GM12878 (cell line): ENCODE measurements at regions of chr15 and their contacts with region 1.

Region 1: DNA sequence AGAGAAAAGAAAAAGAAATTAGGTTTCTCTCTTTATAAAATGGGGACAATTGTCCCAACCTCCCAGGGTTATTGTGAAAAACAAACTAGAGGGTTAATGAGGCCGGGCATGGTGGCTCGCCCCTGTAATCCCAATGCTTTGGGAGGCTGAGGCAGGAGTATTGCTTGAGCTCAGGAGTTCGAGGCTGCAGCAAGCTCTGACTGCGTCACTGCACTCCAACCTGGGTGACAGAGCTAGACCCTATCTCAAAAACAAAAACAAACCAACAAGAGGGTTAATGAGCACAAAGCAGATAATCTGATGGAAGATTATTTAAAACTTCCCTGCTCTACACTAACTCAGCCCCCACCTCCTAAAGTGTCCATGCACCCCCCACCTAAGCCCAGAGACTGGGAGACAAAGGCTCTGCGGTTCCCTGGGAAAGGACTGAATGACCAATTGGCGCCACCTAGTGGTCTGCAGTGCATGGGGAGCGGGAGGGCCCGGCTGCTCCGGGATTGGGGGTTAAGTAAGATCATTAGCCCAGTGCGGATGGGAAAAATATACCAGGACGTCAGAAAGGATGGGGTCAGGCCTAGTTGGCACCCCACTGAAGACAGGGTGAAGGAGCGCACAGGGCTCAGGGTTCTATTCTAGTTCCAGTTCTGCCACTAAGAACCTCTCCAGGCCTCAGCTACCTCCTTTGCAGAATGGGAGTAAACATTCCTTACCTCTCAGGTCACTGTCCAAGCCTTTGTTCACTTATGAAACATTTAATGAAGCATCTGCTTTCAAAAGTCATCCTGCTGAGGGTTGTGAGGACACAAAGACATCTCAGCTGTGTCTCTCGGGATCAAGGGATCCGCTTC is 15.6 kb downstream of the PIF1 start:
- DNase-seq: no peak
- ATAC-seq: peak; percentile 58
- H3K4me3 ChIP-seq: no peak overlapping the region
- H3K27ac ChIP-seq: no peak overlapping the region
- H3K4me1 ChIP-seq: peaks cover 17% of the 10 kb centered on the region
- H3K27me3 ChIP-seq: no peaks in the 10 kb centered on the region
- CTCF ChIP-seq: peak; percentile 92 to 95 (median 95)
- EP300 ChIP-seq: no peak
- POLR2A ChIP-seq: no peak
- RAD21 ChIP-seq: peak; percentile 92

Region 2: GRCh38 chr15:64731012-64731806 is 78.7 kb before region 1 on chr15:
- CTCF ChIA-PET with region 1: interaction called, 529 read pairs
- POLR2A ChIA-PET with region 1: interaction called, 4 read pairs
- RAD21 ChIA-PET with region 1: interaction called, 148 read pairs
- SMC1A ChIA-PET with region 1: interaction called, 308 read pairs
- in situ Hi-C with region 1: loop called (anchors 5 kb)
- intact Hi-C with region 1: loop called (anchors 1 kb)
- DNase-seq: peak; percentile 36
- ATAC-seq: peak; percentile 91
- H3K4me3 ChIP-seq: no peak overlapping the region
- H3K27ac ChIP-seq: no peak overlapping the region
- H3K4me1 ChIP-seq: peaks cover 11% of the 10 kb centered on the region
- H3K27me3 ChIP-seq: no peaks in the 10 kb centered on the region; a peak in 1 of 4 replicates
- CTCF ChIP-seq: peak; percentile 85 to 96 (median 86)
- EP300 ChIP-seq: no peak
- POLR2A ChIP-seq: no peak
- RAD21 ChIP-seq: peak; percentile 98

Region 3: GRCh38 chr15:64761156-64761555 is 48.7 kb before region 1 on chr15:
- CTCF ChIA-PET with region 1: interaction called, 60 read pairs
- POLR2A ChIA-PET with region 1: no interaction called
- RAD21 ChIA-PET with region 1: interaction called, 8 read pairs
- SMC1A ChIA-PET with region 1: interaction called, 308 read pairs
- in situ Hi-C with region 1: no loop called
- intact Hi-C with region 1: no loop called
- DNase-seq: no peak
- ATAC-seq: no peak
- H3K4me3 ChIP-seq: no peak overlapping the region
- H3K27ac ChIP-seq: no peak overlapping the region
- H3K4me1 ChIP-seq: no peaks in the 10 kb centered on the region
- H3K27me3 ChIP-seq: no peaks in the 10 kb centered on the region
- CTCF ChIP-seq: no peak
- EP300 ChIP-seq: no peak
- POLR2A ChIP-seq: no peak
- RAD21 ChIP-seq: no peak

Region 4: DNA sequence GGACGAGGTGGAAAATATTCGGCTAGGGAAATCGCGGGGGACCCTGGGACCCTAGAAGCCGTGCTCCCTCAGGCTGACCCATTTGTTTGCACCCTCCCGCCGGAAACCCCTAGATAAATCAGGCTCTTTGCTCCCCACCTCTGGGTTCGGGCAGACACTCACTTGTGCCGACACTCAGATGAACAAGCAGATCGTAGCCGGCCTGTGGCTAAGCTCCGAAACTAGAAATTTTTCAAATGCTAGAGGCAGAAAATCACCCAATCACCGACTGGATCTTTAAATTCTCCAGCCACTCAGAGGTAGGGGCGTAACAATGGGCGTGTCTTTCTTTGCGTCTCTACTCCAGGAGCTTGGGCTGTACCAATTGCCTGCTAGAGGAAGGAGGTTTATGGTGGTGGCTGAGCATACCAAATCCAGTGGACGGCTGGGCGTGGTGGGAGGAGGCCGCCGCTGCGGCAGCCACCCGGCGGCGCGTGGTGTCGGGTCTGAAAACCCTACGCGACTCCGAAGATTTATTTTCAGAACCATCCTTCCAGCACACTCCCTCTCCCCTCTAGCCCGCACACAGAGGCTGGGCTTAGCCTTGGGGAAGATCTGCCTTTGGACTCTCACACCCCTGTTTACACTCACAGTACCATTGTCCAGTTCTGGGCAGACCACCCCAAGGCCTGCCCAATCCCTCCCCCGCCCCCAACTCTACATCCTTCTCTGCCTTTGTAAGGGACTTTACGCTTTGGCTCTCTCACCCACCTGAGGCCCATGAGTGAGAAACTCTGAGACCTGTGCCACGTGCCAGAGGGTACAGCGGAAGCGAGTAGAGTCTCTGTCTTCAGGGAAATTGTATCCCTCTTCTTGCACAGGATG is 15.8 kb after region 1 on chr15 and contains the start of gene PIF1:
- CTCF ChIA-PET with region 1: interaction called, 115 read pairs
- POLR2A ChIA-PET with region 1: interaction called, 21 read pairs
- RAD21 ChIA-PET with region 1: interaction called, 53 read pairs
- SMC1A ChIA-PET with region 1: interaction called, 61 read pairs
- in situ Hi-C with region 1: no loop called
- intact Hi-C with region 1: no loop called
- DNase-seq: peak; percentile 98
- ATAC-seq: peak; percentile 93
- H3K4me3 ChIP-seq: peak within 1 kb of the TSS; percentile 88
- H3K27ac ChIP-seq: peak within 1 kb of the TSS; percentile 85
- H3K4me1 ChIP-seq: peaks cover 14% of the 10 kb centered on the region
- H3K27me3 ChIP-seq: no peaks in the 10 kb centered on the region
- CTCF ChIP-seq: peak in 1 of 3 experiments; percentile 9; a peak in 1 of 6 replicates
- EP300 ChIP-seq: peak in 1 of 2 experiments; percentile 34; a peak in 1 of 4 replicates
- POLR2A ChIP-seq: peak; percentile 88
- RAD21 ChIP-seq: no peak
- polyA plus RNA-seq, gene PIF1: 3.7 to 7.2 TPM

Region 5: DNA sequence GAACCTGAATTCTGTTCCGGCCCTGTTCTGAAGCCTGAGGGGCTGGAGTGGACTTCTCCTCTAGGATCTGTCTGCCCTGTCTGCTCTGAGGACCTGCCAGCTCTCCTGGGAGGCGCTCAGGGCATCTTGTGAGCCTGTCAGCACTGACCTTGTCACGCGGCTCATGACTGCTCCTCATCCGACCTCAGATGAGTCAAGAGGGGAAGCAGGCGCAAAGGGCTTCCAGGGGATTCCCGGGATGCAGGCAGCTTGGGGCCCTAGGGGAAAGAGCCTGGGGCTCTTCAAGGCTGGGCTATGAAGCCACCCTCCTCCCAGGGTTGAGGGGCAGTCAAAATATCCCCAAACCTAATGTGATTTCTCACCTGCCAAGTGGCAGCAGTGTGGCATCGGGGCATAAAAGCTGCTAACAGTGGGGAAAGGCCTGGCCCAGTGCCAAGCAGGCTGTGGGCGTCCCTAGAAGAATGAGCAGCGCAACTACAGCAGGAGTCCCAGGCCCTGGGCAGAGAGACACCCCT is 74.2 kb after region 1 on chr15:
- CTCF ChIA-PET with region 1: interaction called, 7 read pairs
- POLR2A ChIA-PET with region 1: interaction called, 5 read pairs
- RAD21 ChIA-PET with region 1: interaction called, 14 read pairs
- SMC1A ChIA-PET with region 1: interaction called, 4 read pairs
- in situ Hi-C with region 1: no loop called
- intact Hi-C with region 1: no loop called
- DNase-seq: peak; percentile 79
- ATAC-seq: peak; percentile 92
- H3K4me3 ChIP-seq: no peak overlapping the region
- H3K27ac ChIP-seq: peak overlapping the region; percentile 85
- H3K4me1 ChIP-seq: peaks cover 30% of the 10 kb centered on the region
- H3K27me3 ChIP-seq: no peaks in the 10 kb centered on the region
- CTCF ChIP-seq: no peak
- EP300 ChIP-seq: peak; percentile 44 to 62; a peak in 2 of 4 replicates
- POLR2A ChIP-seq: peak; percentile 65
- RAD21 ChIP-seq: no peak

Region 6: GRCh38 chr15:65089206-65089824 is 279.4 kb after region 1 on chr15:
- CTCF ChIA-PET with region 1: no interaction called
- POLR2A ChIA-PET with region 1: no interaction called
- RAD21 ChIA-PET with region 1: no interaction called
- SMC1A ChIA-PET with region 1: no interaction called
- in situ Hi-C with region 1: no loop called
- intact Hi-C with region 1: no loop called
- DNase-seq: no peak
- ATAC-seq: no peak
- H3K4me3 ChIP-seq: no peak overlapping the region
- H3K27ac ChIP-seq: no peak overlapping the region
- H3K4me1 ChIP-seq: no peaks in the 10 kb centered on the region
- H3K27me3 ChIP-seq: no peaks in the 10 kb centered on the region
- CTCF ChIP-seq: no peak
- EP300 ChIP-seq: no peak
- POLR2A ChIP-seq: no peak
- RAD21 ChIP-seq: no peak